GM12878 (cell line): ENCODE measurements at regions of chr15 and their contacts with region 1.

Region 1: DNA sequence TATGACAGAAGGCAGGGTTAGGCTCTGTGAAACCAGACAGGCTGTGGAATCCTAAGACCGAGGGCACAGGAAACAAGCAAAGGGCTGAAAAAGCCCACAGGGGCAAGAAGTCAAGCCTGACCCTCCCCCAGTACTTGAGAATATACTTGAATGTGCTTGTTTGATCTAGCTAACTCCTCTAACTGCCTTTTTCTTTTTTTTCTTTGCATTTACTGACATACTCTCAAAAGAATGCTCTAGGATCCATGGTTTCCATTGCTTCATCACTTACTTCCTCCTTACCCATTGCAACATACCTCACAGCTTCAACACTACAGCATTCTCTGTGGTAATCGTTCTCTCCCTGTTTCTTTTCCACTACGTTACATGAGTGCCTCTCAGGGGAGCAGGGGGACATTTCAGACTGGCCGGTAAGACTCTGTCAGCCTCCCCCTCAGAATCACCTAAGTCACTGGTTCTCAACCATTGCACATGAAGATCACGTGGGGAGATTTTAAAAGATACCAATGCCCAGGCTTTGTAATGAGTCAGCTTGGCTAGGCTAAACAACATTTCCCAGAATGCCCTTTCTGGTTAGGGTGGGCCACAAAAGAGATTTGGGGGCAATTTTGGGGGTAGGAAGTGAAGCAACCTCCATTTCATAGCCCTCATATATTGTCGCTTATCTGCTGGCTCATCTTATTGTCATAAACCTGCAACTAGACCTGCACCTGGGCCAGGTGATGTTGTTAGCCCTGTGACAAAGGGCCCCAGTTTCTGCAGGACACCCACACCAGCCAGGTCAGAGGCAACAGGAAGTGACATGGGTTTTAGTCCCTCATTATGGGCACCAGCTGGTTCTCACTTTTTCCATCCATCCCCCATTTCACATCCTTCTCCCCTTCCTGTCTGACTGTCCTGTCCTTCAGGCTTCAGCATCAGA is 24.6 kb upstream of the RSL24D1 start:
- DNase-seq: peak; percentile 52
- ATAC-seq: peak; percentile 71
- H3K4me3 ChIP-seq: no peak overlapping the region
- H3K27ac ChIP-seq: no peak overlapping the region; the same call in 1 of the 2 replicates
- H3K4me1 ChIP-seq: peaks cover 33% of the 10 kb centered on the region
- H3K27me3 ChIP-seq: no peaks in the 10 kb centered on the region
- CTCF ChIP-seq: no peak
- EP300 ChIP-seq: 0 out of 4 replicates have a peak, but pooled peaks of 1 of the 2 experiments have one; percentile 22
- POLR2A ChIP-seq: no peak
- RAD21 ChIP-seq: 0 out of 2 replicates have a peak, but pooled peaks have one; percentile 2

Region 2: GRCh38 chr15:55202206-55202605 is 19.1 kb before region 1 on chr15:
- CTCF ChIA-PET with region 1: interaction called, 15 read pairs
- POLR2A ChIA-PET with region 1: no interaction called
- RAD21 ChIA-PET with region 1: interaction called, 8 read pairs
- SMC1A ChIA-PET with region 1: interaction called, 8 read pairs
- in situ Hi-C with region 1: no loop called
- intact Hi-C with region 1: no loop called
- DNase-seq: no peak
- ATAC-seq: no peak
- H3K4me3 ChIP-seq: no peak overlapping the region
- H3K27ac ChIP-seq: no peak overlapping the region
- H3K4me1 ChIP-seq: no peaks in the 10 kb centered on the region
- H3K27me3 ChIP-seq: no peaks in the 10 kb centered on the region
- CTCF ChIP-seq: no peak
- EP300 ChIP-seq: no peak
- POLR2A ChIP-seq: no peak
- RAD21 ChIP-seq: no peak

Region 3: GRCh38 chr15:55255714-55256113 is 34.4 kb after region 1 on chr15:
- CTCF ChIA-PET with region 1: interaction called, 7 read pairs
- POLR2A ChIA-PET with region 1: interaction called, 3 read pairs
- RAD21 ChIA-PET with region 1: interaction called, 4 read pairs
- SMC1A ChIA-PET with region 1: interaction called, 12 read pairs
- in situ Hi-C with region 1: no loop called
- intact Hi-C with region 1: loop called (anchors 5 kb)
- DNase-seq: no peak
- ATAC-seq: peak; percentile 75
- H3K4me3 ChIP-seq: peak overlapping the region; percentile 4; the same call in 1 of the 2 replicates
- H3K27ac ChIP-seq: peak overlapping the region; percentile 4
- H3K4me1 ChIP-seq: peaks cover 24% of the 10 kb centered on the region
- H3K27me3 ChIP-seq: no peaks in the 10 kb centered on the region
- CTCF ChIP-seq: no peak
- EP300 ChIP-seq: no peak
- POLR2A ChIP-seq: no peak
- RAD21 ChIP-seq: no peak

Region 4: DNA sequence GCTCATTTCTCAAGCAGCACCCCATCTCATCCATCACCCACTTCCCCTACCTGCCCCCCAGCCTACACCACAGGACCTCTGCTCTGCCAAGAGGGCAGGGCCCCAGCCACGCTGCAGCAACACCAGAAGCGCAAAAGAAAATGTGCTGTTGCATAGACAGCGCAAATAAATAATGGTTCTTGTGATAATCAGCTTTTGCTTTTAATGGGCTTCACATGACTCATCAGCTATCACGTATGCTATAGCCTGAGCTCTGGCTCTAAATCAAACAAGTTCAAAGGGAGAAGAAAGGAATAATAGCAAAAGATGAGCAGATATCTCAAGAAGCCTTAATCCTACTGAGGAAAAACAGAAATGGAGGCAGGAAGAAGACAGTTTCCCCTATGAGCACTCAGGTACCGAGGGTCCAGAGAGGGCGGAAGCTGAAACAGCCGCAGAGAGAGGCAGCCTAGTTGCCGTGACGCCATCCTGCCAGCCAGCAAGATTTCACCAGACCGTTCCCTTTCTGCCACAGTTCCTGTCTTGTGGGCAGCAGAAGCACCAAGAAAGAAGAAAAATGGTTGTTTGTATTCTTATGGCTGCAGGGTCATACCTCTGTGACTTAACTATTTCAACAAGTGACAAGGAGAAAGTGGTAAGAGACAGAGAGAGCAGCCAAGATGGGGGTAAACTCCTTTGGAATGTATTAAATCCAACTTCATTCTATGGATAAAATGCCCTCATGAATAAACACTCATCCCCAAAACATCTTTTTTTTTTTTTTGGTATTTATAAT is 46.2 kb after region 1 on chr15:
- CTCF ChIA-PET with region 1: interaction called, 12 read pairs
- POLR2A ChIA-PET with region 1: interaction called, 3 read pairs
- RAD21 ChIA-PET with region 1: interaction called, 4 read pairs
- SMC1A ChIA-PET with region 1: interaction called, 7 read pairs
- in situ Hi-C with region 1: no loop called
- intact Hi-C with region 1: no loop called
- DNase-seq: no peak
- ATAC-seq: peak; percentile 98
- H3K4me3 ChIP-seq: no peak overlapping the region
- H3K27ac ChIP-seq: no peak overlapping the region
- H3K4me1 ChIP-seq: peaks cover 7% of the 10 kb centered on the region
- H3K27me3 ChIP-seq: no peaks in the 10 kb centered on the region
- CTCF ChIP-seq: no peak
- EP300 ChIP-seq: no peak
- POLR2A ChIP-seq: no peak
- RAD21 ChIP-seq: no peak

Region 5: DNA sequence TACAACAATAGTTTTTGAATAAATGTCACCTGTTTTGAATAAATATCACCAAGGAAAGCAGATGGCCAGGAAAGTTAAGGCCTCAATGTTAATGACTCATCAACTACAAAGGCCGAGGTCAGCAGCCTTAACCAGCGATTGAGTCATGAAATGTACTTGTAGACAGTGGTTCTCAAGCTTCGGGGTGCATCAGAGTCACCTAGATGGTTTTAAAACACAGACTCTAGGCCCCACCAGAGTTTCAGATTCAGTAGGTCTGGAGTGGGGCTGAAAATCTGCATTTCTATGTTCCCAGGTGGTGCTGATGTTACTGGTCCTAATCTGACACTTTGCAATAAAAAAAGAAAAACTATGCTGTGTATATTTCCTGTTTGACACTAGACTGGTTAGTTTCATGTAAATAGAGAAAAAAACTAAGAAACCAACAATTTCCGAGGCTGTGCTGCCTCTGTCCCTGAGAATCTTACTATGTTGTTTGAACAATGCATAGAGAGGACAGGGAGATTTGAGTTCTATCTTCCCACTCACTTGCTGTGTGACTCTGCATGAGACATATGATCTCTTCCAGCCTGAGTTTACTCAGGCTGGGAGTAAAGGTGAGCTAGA is 58.5 kb after region 1 on chr15:
- CTCF ChIA-PET with region 1: interaction called, 11 read pairs
- POLR2A ChIA-PET with region 1: interaction called, 9 read pairs
- RAD21 ChIA-PET with region 1: interaction called, 20 read pairs
- SMC1A ChIA-PET with region 1: interaction called, 110 read pairs
- in situ Hi-C with region 1: loop called (anchors 5 kb)
- intact Hi-C with region 1: no loop called
- DNase-seq: peak; percentile 96
- ATAC-seq: peak; percentile 74
- H3K4me3 ChIP-seq: peak overlapping the region; percentile 11; the same call in 1 of the 2 replicates
- H3K27ac ChIP-seq: peak overlapping the region; percentile 84
- H3K4me1 ChIP-seq: peaks cover 48% of the 10 kb centered on the region
- H3K27me3 ChIP-seq: no peaks in the 10 kb centered on the region
- CTCF ChIP-seq: no peak
- EP300 ChIP-seq: peak; percentile 56 to 62; a peak in 2 of 4 replicates
- POLR2A ChIP-seq: no peak
- RAD21 ChIP-seq: peak; percentile 26; the same call in 1 of the 2 replicates

Region 6: DNA sequence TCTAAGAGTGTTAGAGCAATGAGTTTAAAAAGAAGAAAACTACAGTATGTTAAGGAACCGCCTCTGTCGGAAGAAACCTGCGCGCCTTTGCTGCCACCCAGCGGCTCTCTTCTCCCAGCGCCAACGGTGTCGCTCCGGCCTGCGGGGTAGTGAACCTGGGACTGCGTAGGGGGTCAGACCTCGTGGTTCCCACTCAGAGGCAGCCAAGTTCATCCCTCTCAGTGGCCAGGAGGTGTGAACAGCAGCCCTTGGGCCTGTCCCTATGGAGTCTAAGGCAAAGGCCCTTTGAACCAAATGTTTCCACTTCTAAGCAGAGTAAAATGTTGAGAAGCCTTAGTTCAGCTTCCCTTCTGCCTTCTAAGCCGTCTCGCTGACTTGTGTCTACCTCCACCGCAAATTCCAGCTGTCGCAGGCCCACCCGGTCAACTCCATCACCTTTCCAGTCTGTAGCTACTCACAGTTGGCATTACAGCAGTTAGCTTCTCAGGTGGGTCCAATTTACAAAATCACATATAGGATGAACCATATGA is 69.2 kb after region 1 on chr15:
- CTCF ChIA-PET with region 1: interaction called, 50 read pairs
- POLR2A ChIA-PET with region 1: no interaction called
- RAD21 ChIA-PET with region 1: interaction called, 59 read pairs
- SMC1A ChIA-PET with region 1: interaction called, 110 read pairs
- in situ Hi-C with region 1: no loop called
- intact Hi-C with region 1: loop called (anchors 1 kb)
- DNase-seq: no peak
- ATAC-seq: peak; percentile 83
- H3K4me3 ChIP-seq: peak overlapping the region; percentile 89; the same call in 1 of the 2 replicates
- H3K27ac ChIP-seq: no peak overlapping the region; the same call in 1 of the 2 replicates
- H3K4me1 ChIP-seq: no peaks in the 10 kb centered on the region; the same call in 1 of the 2 replicates
- H3K27me3 ChIP-seq: no peaks in the 10 kb centered on the region
- CTCF ChIP-seq: peak; percentile 90 to 97 (median 92)
- EP300 ChIP-seq: no peak; a peak in 1 of 4 replicates
- POLR2A ChIP-seq: no peak
- RAD21 ChIP-seq: peak; percentile 96

Region 7: DNA sequence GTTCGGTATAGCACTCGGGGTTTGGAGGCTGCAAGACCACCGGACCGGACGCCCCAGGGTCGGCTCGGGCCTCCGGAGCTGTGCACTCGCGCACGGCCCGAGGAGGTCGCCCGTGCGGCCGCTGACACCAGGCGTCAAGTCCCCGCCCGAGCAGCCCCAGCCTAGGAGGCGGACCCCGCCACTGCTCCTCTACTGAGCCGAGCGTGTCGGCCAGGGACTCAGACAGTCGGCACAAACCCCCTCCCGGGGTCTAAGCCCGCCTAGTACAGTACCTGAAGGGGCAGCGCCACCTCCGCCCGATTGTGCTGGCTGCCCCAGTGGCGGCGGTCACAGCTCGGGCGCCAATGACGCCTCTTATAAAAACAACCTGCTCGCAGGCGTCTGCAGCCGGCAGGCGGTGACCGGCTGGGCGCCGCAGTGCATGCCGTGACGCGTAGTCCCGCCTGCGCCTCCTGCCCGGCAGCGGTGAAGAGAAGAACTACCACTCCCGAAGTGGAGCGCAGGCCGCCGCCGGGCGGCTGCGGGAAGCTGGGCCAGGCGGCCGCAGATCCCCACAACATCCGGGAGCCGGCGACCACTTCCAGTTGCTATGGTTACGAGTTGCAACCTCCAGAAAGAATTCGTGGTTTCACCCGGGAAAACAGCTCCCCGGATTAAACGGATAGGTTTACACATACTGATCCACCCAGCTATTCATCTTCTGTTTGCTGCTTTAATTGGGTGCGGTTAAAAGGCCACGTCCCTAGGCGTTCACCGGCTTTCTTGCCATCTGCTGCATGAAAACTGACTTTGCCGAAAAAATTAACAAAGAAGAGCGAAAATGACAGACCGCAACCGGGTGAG is 186.8 kb after region 1 on chr15 and contains the starts of genes CCPG1 and PIERCE2:
- CTCF ChIA-PET with region 1: interaction called, 4 read pairs
- POLR2A ChIA-PET with region 1: no interaction called
- RAD21 ChIA-PET with region 1: interaction called, 3 read pairs
- SMC1A ChIA-PET with region 1: interaction called, 10 read pairs
- in situ Hi-C with region 1: no loop called
- intact Hi-C with region 1: no loop called
- DNase-seq: peak; percentile 72
- ATAC-seq: peak; percentile 92
- H3K4me3 ChIP-seq: peak within 1 kb of the TSS; percentile 78
- H3K27ac ChIP-seq: peak within 1 kb of the TSS; percentile 55
- H3K4me1 ChIP-seq: peaks cover 22% of the 10 kb centered on the region
- H3K27me3 ChIP-seq: no peaks in the 10 kb centered on the region
- CTCF ChIP-seq: peak; percentile 58 to 73 (median 64)
- EP300 ChIP-seq: peak in 1 of 2 experiments; percentile 60; a peak in 1 of 4 replicates
- POLR2A ChIP-seq: peak; percentile 86
- RAD21 ChIP-seq: no peak
- polyA plus RNA-seq, gene CCPG1: 6.6 to 7.5 TPM
- polyA plus RNA-seq, gene PIERCE2: 0.93 to 1.3 TPM

Region 8: DNA sequence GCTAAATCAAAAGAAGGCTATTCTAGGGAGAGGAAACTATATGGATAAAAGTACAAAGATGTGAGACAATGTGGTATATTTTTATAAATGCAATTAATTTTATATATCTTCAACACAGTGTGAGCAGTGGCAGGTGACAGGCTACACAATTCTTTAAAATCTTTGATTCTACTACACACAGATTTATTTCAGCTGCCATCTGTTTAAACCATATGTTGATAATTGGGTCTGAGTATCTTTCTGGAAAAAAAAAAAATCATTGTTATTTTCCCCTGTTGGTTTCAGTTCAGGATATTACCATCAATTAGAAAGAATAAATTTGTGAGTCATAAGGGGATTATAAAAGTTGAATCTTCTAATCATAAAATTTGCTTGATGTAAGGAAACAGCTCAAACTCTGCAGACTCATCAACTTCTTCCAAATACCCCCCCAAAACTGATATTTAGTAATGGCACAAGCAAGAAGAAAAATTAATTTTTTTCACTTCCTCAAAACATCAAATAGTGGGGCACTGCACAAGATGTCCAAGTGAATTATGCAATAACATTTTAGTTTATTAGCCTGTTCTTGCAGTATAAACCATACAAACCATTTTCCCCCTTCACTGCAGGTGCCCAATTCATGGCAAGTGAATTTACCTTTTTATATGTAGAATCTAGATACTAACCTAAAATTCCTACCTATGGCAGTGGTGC is 199.0 kb after region 1 on chr15:
- CTCF ChIA-PET with region 1: no interaction called
- POLR2A ChIA-PET with region 1: no interaction called
- RAD21 ChIA-PET with region 1: no interaction called
- SMC1A ChIA-PET with region 1: no interaction called
- in situ Hi-C with region 1: no loop called
- intact Hi-C with region 1: no loop called
- DNase-seq: no peak
- ATAC-seq: no peak
- H3K4me3 ChIP-seq: no peak overlapping the region
- H3K27ac ChIP-seq: no peak overlapping the region
- H3K4me1 ChIP-seq: no peaks in the 10 kb centered on the region
- H3K27me3 ChIP-seq: no peaks in the 10 kb centered on the region
- CTCF ChIP-seq: no peak
- EP300 ChIP-seq: no peak
- POLR2A ChIP-seq: no peak
- RAD21 ChIP-seq: no peak